CD4-positive, alpha-beta T cell (primary cell): ENCODE measurements at regions of chr15 and their contacts with region 1.

Region 1: DNA sequence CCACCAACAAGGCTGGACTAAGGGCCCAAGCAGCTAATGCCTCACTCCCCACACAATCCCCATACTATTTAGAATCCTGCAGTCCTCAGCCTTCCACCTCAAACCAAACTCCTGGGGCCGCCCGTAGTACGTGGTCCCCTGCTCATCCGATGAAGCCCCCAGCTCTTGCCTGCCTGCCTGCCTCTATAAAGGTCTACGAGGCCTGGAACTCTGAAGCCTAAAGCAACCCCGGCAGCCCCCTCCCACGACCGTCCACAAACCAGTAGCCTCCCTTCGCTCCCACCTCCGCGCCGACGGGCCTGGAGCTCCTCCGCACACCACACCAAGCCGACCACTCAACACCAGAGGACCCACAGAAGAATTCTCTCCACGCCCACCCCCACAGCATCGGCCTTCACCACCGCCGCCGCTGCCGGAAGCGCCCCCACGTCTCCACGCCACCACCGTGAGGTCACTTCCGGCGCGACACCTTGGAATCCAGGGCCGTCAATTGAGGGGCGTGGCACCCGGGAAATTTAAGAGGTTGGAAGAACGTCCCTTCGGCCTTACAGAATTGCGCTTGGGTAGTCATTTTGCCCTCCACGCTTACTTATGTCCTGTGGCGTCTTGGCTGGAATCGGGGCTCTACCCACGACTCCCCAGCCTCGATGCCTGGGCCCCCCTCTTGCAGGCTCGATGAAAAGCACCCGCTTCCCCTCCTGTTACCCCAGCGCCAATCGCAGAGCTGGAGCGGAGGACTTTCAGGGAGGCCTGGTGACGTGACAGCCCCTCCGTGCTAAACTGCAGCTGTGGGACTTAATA is at the start of gene EDC3:
- DNase-seq: peak; percentile 70 to 93 (median 80)
- ATAC-seq: peak; percentile 86
- H3K4me3 ChIP-seq: peak within 1 kb of the TSS; percentile 78
- H3K4me3 Mint-ChIP-seq: peak within 1 kb of the TSS; percentile 100
- H3K27ac ChIP-seq: peak within 1 kb of the TSS; percentile 60 to 83
- H3K27ac Mint-ChIP-seq: peak within 1 kb of the TSS; percentile 98
- H3K4me1 ChIP-seq: peaks cover 16% of the 10 kb centered on the region
- H3K4me1 Mint-ChIP-seq: peaks cover 44% of the 10 kb centered on the region
- H3K27me3 ChIP-seq: no peaks in the 10 kb centered on the region
- H3K27me3 Mint-ChIP-seq: peaks cover under 1% of the 10 kb centered on the region
- CTCF ChIP-seq: no peak
- total RNA-seq, gene EDC3: 11.0 to 11.1 TPM

Region 2: DNA sequence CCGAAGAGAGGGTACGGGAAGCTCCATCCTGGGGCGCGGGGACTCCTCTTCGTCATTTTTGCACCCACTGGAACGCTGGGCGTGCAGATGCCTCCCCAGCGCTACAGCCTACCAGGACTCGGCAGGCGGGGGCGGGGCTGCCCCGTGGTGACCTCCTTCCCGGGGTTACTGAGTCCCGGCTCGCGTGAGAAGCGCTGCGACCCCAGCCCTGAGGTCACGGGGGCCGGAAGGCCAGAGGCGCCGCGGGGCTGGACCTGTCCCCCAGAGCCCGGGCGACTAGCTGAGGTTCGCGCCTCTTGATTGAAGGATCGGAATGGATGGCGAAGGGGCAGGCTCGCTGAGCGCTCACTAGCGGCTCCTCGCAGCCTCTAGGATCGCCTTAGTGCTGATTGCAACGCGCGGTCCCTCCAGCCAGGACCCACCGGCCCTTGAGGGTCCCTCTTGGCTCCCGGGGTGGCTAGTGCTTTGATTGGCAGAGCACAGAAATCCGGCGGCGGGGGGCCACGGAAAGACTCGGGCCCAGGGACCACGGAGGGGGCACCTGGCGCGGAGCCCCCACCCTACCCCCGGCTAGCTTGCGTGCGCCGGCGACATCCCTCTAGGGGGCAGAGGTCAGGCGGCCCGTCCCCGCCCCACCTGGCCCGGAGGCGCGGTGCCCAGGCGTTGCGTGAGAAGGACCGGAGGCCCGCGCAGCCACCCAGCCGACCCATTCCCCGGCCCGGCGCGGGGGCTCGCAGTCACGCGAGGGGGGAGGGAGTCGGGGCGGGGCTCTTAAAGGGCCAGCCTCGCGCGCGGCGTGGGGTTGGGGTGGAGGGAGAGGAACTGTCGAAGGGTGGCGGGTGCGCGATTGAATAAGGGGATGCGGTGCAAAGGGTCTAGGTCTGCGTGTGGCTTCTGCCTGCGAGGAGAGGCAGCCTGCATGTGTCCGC is 30.3 kb after region 1 on chr15:
- CTCF ChIA-PET with region 1: no interaction called
- POLR2A ChIA-PET with region 1: interaction called, 7 read pairs
- intact Hi-C with region 1: loop called in 1 of 2 experiments (anchors 2 kb)
- DNase-seq: peak; percentile 17 to 87 (median 37)
- ATAC-seq: peak; percentile 75
- H3K4me3 ChIP-seq: peak overlapping the region; percentile 71
- H3K4me3 Mint-ChIP-seq: peak overlapping the region; percentile 86
- H3K27ac ChIP-seq: no peak overlapping the region
- H3K27ac Mint-ChIP-seq: no peak overlapping the region
- H3K4me1 ChIP-seq: peaks cover 15% of the 10 kb centered on the region
- H3K4me1 Mint-ChIP-seq: peaks cover 5% of the 10 kb centered on the region
- H3K27me3 ChIP-seq: peaks cover 0 to 6% of the 10 kb centered on the region in 2 experiments
- H3K27me3 Mint-ChIP-seq: peaks cover 11% of the 10 kb centered on the region
- CTCF ChIP-seq: no peak